Lower leg skin (tissue), 4 donors: ENCODE measurements at regions of chr1 and their contacts with region 1.

Region 1: GRCh38 chr1:43934101-43934985 is 742 bp downstream of the ARTN start:
- DNase-seq: no peak
- H3K4me3 ChIP-seq: no peak overlapping the region
- CTCF ChIP-seq: peak in 1 of 3 donors; percentile 72
- POLR2A ChIP-seq: no peak

Region 2: DNA sequence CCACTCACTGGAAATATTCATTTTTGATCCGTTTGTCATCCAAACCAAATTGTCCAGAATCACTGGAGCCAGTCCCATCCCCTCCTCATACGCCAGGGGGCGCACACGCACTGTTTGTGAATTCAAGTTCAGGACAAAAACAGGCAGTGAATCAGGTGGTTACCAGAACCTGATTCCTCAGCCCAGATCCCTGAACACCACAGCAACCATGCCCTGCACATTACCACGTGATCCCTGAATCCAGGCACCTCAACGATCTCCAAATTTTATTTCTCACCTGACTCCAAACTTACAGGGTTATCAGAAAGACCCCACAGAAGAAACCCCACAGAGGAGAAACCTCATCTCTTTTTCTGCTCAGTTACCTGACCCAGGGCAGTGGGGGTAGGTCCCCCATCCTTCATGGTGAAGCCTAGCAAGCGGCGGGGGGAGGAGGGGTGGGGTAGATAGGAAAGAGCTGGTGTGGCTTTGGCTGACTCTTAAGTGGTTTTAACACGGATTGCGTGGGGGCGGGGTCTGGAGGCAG is 405.1 kb before region 1 on chr1:
- intact Hi-C with region 1: loop called (anchors 10 kb)
- DNase-seq: peak; percentile 88 to 97
- H3K4me3 ChIP-seq: no peak overlapping the region
- CTCF ChIP-seq: peak in 2 of 3 donors; percentile 72 to 94
- POLR2A ChIP-seq: no peak

Region 3: GRCh38 chr1:43763497-43763973 is 170.8 kb before region 1 on chr1:
- intact Hi-C with region 1: loop called (anchors 5 kb)
- DNase-seq: peak; percentile 83 to 89
- H3K4me3 ChIP-seq: no peak overlapping the region
- CTCF ChIP-seq: peak in 1 of 3 donors; percentile 76
- POLR2A ChIP-seq: no peak

Region 4: GRCh38 chr1:44049839-44050238 is 115.5 kb after region 1 on chr1:
- intact Hi-C with region 1: loop called (anchors 10 kb)
- DNase-seq: no peak
- H3K4me3 ChIP-seq: no peak overlapping the region
- CTCF ChIP-seq: no peak
- POLR2A ChIP-seq: no peak